Vagina (tissue), 2 donors: ENCODE measurements at regions of chr6 and their contacts with region 1.

Region 1: GRCh38 chr6:26025894-26026832 is 61.1 kb upstream of the HFE start:
- DNase-seq: peak in 1 of 2 donors; percentile 96
- H3K4me3 ChIP-seq: peak overlapping the region; percentile 52 to 77
- H3K27ac ChIP-seq: peak overlapping the region; percentile 84
- H3K4me1 ChIP-seq: peaks cover 10% of the 10 kb centered on the region
- H3K27me3 ChIP-seq: no peaks in the 10 kb centered on the region
- CTCF ChIP-seq: peak; percentile 58 to 82 (median 68)
- POLR2A ChIP-seq: peak in 1 of 2 donors; percentile 16

Region 2: GRCh38 chr6:26065952-26066380 is 39.8 kb after region 1 on chr6:
- intact Hi-C with region 1: no loop called
- DNase-seq: no peak
- H3K4me3 ChIP-seq: no peak overlapping the region
- H3K27ac ChIP-seq: no peak overlapping the region
- H3K4me1 ChIP-seq: no peaks in the 10 kb centered on the region
- H3K27me3 ChIP-seq: no peaks in the 10 kb centered on the region
- CTCF ChIP-seq: peak in 2 of 3 experiments; percentile 78
- POLR2A ChIP-seq: no peak

Region 3: DNA sequence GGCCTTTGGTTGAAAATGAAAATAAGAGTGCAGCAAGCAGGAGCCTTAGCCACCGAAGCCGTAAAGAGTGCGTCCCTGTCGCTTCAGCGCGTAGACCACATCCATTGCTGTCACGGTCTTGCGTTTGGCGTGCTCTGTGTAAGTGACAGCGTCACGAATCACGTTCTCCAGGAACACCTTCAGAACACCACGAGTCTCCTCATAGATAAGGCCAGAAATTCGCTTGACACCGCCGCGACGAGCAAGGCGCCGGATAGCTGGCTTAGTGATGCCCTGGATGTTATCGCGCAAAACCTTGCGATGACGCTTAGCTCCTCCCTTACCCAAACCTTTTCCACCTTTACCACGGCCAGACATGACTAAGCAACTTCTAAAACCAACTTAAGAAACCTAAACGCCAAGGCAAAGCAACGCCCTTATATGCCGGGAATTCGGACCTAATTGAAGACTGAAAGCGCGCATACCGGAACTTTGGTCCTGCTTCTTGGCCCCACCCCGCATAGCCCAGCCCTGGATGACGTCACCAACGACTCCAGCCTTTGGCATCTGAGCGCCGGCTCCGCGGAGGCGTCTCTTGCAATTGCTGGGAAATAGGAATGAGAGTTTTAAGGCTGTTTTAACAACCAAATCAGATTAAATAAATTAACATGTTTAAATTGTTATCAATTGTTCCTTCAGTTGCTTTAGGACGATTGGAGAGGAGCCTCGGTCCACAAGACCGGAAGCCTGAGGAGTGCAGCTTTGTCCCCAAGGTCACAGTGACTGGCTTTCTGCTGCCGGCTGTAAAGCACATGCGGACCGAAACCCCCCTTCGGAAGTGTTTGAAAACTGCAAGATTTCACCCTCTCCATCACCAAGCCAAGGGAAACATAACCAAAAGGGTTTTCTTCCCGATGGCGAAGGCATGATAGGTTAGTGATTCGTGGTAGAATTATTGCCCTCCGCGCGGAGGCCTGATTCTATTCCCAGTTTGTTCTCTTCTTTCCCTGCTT is 259.3 kb after region 1 on chr6:
- intact Hi-C with region 1: loop called (anchors 10 kb)
- DNase-seq: peak; percentile 98 to 99
- H3K4me3 ChIP-seq: peak overlapping the region; percentile 83 to 89
- H3K27ac ChIP-seq: peak overlapping the region; percentile 89
- H3K4me1 ChIP-seq: peaks cover 15% of the 10 kb centered on the region
- H3K27me3 ChIP-seq: no peaks in the 10 kb centered on the region
- CTCF ChIP-seq: no peak
- POLR2A ChIP-seq: peak in 1 of 2 donors; percentile 82

Region 4: GRCh38 chr6:26394289-26394688 is 368.1 kb after region 1 on chr6:
- intact Hi-C with region 1: no loop called
- DNase-seq: no peak
- H3K4me3 ChIP-seq: no peak overlapping the region
- H3K27ac ChIP-seq: no peak overlapping the region
- H3K4me1 ChIP-seq: no peaks in the 10 kb centered on the region
- H3K27me3 ChIP-seq: no peaks in the 10 kb centered on the region
- CTCF ChIP-seq: no peak
- POLR2A ChIP-seq: no peak

Region 5: GRCh38 chr6:26537846-26538571 is 511.8 kb after region 1 on chr6 and contains the start of gene HMGN4:
- intact Hi-C with region 1: loop called (anchors 10 kb)
- DNase-seq: peak in 1 of 2 donors; percentile 96
- H3K4me3 ChIP-seq: peak within 1 kb of the TSS; percentile 71 to 74
- H3K27ac ChIP-seq: peak within 1 kb of the TSS; percentile 93
- H3K4me1 ChIP-seq: peaks cover 36% of the 10 kb centered on the region
- H3K27me3 ChIP-seq: no peaks in the 10 kb centered on the region
- CTCF ChIP-seq: no peak
- POLR2A ChIP-seq: peak in 1 of 2 donors; percentile 41
- total RNA-seq, gene HMGN4: 58.4 TPM

Region 6: GRCh38 chr6:26592649-26593048 is 566.5 kb after region 1 on chr6:
- intact Hi-C with region 1: no loop called
- DNase-seq: no peak
- H3K4me3 ChIP-seq: no peak overlapping the region
- H3K27ac ChIP-seq: no peak overlapping the region
- H3K4me1 ChIP-seq: peaks cover 17% of the 10 kb centered on the region
- H3K27me3 ChIP-seq: no peaks in the 10 kb centered on the region
- CTCF ChIP-seq: no peak
- POLR2A ChIP-seq: no peak

Region 7: DNA sequence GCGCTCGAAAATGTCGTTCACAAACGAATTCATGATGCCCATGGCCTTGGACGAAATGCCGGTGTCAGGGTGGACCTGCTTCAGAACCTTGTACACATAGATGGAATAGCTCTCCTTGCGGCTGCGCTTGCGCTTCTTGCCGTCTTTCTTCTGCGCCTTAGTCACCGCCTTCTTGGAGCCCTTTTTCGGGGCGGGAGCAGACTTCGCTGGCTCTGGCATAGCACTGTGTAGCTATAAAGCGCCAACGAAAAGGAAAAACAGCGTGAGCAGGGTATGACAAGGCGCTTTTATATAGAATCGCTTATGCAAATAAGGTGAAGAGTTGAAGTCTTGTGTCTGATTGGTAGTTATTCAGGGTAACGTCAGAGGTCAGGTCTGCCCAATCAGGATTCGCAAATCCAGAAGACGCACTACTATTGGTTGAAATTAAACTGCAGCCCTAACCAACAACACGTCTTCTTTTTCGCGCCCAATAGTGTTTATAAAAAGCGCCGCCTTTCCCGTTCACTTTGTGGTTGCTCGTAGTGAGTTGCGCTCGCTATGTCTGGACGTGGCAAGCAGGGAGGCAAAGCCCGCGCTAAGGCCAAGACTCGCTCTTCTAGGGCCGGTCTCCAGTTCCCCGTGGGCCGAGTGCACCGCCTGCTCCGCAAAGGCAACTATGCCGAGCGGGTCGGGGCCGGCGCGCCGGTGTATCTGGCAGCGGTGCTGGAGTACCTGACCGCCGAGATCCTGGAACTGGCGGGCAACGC is 1106.5 kb after region 1 on chr6:
- intact Hi-C with region 1: loop called (anchors 10 kb)
- DNase-seq: peak; percentile 97 to 99
- H3K4me3 ChIP-seq: peak overlapping the region; percentile 58 to 61
- H3K27ac ChIP-seq: peak overlapping the region; percentile 90
- H3K4me1 ChIP-seq: peaks cover 20% of the 10 kb centered on the region
- H3K27me3 ChIP-seq: no peaks in the 10 kb centered on the region
- CTCF ChIP-seq: no peak
- POLR2A ChIP-seq: peak; percentile 5 to 93

Region 8: GRCh38 chr6:27295301-27296081 is 1269.3 kb after region 1 on chr6:
- intact Hi-C with region 1: no loop called
- DNase-seq: no peak
- H3K4me3 ChIP-seq: no peak overlapping the region
- H3K27ac ChIP-seq: no peak overlapping the region
- H3K4me1 ChIP-seq: no peaks in the 10 kb centered on the region
- H3K27me3 ChIP-seq: no peaks in the 10 kb centered on the region
- CTCF ChIP-seq: no peak
- POLR2A ChIP-seq: no peak